GM12878 (cell line): ENCODE measurements at regions of chr14 and their contacts with region 1.

Region 1: DNA sequence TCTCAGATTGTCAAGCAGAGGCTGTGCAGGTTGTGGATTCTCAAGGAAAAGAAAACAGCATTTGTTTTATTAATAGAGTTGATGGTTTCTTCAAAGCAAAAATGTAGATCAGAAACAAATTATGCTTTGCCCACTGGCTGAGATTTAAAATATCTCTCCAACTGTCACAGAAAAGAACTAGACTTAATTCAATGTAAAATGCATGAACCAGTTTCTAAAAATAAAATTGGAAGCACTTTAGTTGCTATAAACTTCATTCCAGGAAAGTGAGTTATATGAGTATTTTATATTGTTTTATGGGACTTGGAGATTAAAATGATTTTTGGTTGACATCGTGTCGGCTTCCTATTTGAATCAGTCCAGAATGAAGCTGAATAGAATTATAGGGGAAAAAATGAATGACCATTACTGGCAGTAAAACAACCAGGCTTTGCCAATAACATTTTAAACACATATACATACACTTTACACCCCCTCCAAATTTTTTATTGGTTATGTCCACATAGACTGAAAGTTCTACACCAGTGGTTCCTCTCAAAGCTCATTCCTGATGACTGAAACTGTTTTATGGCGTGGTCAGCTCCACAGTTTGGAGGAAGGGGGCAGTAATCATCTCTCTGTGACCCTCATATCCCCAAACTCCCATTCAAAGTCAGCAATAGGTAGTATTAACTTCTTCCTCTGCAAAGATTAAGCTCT is 55.5 kb upstream of the DAAM1 start:
- DNase-seq: no peak
- ATAC-seq: no peak
- H3K4me3 ChIP-seq: no peak overlapping the region
- H3K27ac ChIP-seq: no peak overlapping the region
- H3K4me1 ChIP-seq: no peaks in the 10 kb centered on the region
- H3K27me3 ChIP-seq: no peaks in the 10 kb centered on the region
- CTCF ChIP-seq: peak in 1 of 3 experiments; percentile 14; a peak in 1 of 6 replicates
- EP300 ChIP-seq: no peak
- POLR2A ChIP-seq: no peak
- RAD21 ChIP-seq: no peak

Region 2: GRCh38 chr14:58533446-58533845 is 599.5 kb before region 1 on chr14:
- CTCF ChIA-PET with region 1: no interaction called
- POLR2A ChIA-PET with region 1: no interaction called
- RAD21 ChIA-PET with region 1: no interaction called
- SMC1A ChIA-PET with region 1: no interaction called
- in situ Hi-C with region 1: no loop called
- intact Hi-C with region 1: no loop called
- DNase-seq: no peak
- ATAC-seq: peak; percentile 66
- H3K4me3 ChIP-seq: no peak overlapping the region
- H3K27ac ChIP-seq: no peak overlapping the region
- H3K4me1 ChIP-seq: no peaks in the 10 kb centered on the region
- H3K27me3 ChIP-seq: no peaks in the 10 kb centered on the region
- CTCF ChIP-seq: no peak
- EP300 ChIP-seq: no peak
- POLR2A ChIP-seq: no peak
- RAD21 ChIP-seq: no peak

Region 3: GRCh38 chr14:59046746-59047145 is 86.2 kb before region 1 on chr14:
- CTCF ChIA-PET with region 1: no interaction called
- POLR2A ChIA-PET with region 1: no interaction called
- RAD21 ChIA-PET with region 1: no interaction called
- SMC1A ChIA-PET with region 1: no interaction called
- in situ Hi-C with region 1: no loop called
- intact Hi-C with region 1: no loop called
- DNase-seq: no peak
- ATAC-seq: no peak
- H3K4me3 ChIP-seq: no peak overlapping the region
- H3K27ac ChIP-seq: no peak overlapping the region
- H3K4me1 ChIP-seq: no peaks in the 10 kb centered on the region
- H3K27me3 ChIP-seq: no peaks in the 10 kb centered on the region
- CTCF ChIP-seq: no peak
- EP300 ChIP-seq: no peak
- POLR2A ChIP-seq: no peak
- RAD21 ChIP-seq: no peak

Region 4: DNA sequence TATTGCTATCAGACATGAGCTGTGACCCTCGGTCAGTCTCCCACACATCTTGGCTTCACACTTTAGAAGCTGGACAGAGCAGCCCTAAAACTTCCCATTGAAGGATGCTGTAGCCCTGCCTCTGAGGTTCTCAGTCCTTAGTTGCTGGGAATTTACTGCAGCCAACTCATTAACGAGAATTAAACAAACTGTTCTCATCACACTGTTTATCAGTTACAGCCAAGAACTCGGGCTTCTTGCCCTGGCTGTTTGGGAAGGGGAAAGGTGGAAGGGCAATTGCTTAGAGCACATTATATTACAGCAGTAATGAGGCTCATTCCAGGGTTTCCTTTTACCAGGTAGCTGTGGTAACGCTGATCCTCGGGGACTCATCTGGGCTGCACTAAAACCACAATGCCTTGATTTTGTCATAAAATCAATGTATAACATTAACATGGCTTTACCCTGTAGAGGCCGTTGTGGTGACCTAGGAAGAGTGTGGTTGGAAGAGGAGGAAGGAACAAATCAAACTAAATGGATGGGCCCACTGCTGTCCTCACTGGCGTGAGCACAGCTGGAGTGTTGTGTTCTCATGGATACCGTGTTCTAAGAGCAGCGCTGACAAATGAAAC is 245.2 kb after region 1 on chr14:
- CTCF ChIA-PET with region 1: no interaction called
- POLR2A ChIA-PET with region 1: no interaction called
- RAD21 ChIA-PET with region 1: no interaction called
- SMC1A ChIA-PET with region 1: no interaction called
- in situ Hi-C with region 1: no loop called
- intact Hi-C with region 1: no loop called
- DNase-seq: no peak
- ATAC-seq: no peak
- H3K4me3 ChIP-seq: no peak overlapping the region
- H3K27ac ChIP-seq: no peak overlapping the region
- H3K4me1 ChIP-seq: no peaks in the 10 kb centered on the region
- H3K27me3 ChIP-seq: no peaks in the 10 kb centered on the region
- CTCF ChIP-seq: no peak
- EP300 ChIP-seq: no peak
- POLR2A ChIP-seq: no peak
- RAD21 ChIP-seq: no peak

Region 5: DNA sequence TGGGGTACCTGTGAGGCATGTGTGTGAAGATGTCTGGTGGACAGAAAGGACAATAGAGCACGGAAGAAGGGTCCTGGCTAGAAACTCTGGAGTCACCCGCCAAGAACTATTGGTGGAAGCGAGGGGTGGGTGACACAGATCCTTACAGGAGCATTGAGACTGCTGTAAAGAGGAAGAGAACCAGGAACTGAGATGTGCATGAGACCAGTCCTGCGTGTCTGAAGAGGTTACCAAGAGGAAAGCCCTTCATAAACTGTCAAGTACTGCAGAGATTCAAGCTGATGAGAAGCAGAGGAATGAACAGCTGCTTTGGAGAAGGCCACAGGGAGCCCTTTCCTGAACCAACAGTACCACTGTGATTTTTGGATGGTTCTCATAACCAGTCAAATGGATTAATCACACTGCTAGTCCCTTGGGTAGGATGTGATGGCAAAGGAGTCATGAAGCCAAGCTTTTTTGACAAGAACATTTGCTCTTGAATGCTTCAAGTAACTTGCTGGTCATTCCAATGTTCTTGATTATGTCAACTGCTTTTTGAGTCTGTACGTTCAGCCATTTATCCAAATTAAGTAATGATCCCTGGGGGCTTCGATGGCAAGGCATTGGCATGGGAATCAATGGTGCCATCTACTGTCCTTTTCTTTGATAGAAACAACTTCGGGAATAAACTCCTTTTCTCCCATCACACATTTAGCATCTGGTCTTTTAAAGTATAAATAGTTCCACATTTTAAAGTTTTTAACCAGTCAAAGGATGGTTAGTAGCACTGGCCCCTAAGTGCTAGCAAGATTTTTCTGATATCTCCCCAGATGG is 289.3 kb after region 1 on chr14:
- CTCF ChIA-PET with region 1: interaction called, 20 read pairs
- POLR2A ChIA-PET with region 1: no interaction called
- RAD21 ChIA-PET with region 1: interaction called, 5 read pairs
- SMC1A ChIA-PET with region 1: interaction called, 11 read pairs
- in situ Hi-C with region 1: no loop called
- intact Hi-C with region 1: no loop called
- DNase-seq: no peak
- ATAC-seq: peak; percentile 75
- H3K4me3 ChIP-seq: no peak overlapping the region
- H3K27ac ChIP-seq: no peak overlapping the region
- H3K4me1 ChIP-seq: peaks cover 5% of the 10 kb centered on the region; the same call in 1 of the 2 replicates
- H3K27me3 ChIP-seq: no peaks in the 10 kb centered on the region
- CTCF ChIP-seq: peak in 2 of 3 experiments; percentile 13 to 43; a peak in 3 of 6 replicates
- EP300 ChIP-seq: no peak
- POLR2A ChIP-seq: no peak
- RAD21 ChIP-seq: peak; percentile 56

Region 6: DNA sequence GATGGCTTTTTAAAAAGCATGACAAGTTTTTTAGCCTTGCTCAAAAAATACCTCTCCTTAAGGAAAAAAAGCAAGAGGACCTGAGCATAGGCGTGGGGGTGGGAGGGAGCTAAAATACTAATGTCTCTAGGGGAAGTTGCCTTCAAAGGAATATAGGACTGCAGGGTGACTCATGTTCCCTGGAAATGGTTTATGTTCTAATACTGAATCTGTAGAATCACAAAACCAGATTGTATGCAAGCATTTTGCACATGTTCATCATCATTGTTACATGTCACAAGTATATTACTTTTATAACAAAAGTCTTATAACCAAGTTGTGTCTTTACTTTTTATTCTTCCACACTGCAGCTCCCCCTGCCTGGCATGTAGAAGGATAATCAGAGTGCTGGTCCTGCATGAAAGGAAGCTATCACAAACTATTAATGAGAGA is 295.7 kb after region 1 on chr14:
- CTCF ChIA-PET with region 1: interaction called, 20 read pairs
- POLR2A ChIA-PET with region 1: no interaction called
- RAD21 ChIA-PET with region 1: interaction called, 5 read pairs
- SMC1A ChIA-PET with region 1: interaction called, 7 read pairs
- in situ Hi-C with region 1: no loop called
- intact Hi-C with region 1: no loop called
- DNase-seq: no peak
- ATAC-seq: no peak
- H3K4me3 ChIP-seq: no peak overlapping the region
- H3K27ac ChIP-seq: no peak overlapping the region
- H3K4me1 ChIP-seq: no peaks in the 10 kb centered on the region
- H3K27me3 ChIP-seq: no peaks in the 10 kb centered on the region
- CTCF ChIP-seq: no peak; a peak in 1 of 6 replicates
- EP300 ChIP-seq: no peak
- POLR2A ChIP-seq: no peak
- RAD21 ChIP-seq: peak; percentile 30; the same call in 1 of the 2 replicates